ENCODE measurements at regions of chr2 and their contacts with region 1.

Region 1: DNA sequence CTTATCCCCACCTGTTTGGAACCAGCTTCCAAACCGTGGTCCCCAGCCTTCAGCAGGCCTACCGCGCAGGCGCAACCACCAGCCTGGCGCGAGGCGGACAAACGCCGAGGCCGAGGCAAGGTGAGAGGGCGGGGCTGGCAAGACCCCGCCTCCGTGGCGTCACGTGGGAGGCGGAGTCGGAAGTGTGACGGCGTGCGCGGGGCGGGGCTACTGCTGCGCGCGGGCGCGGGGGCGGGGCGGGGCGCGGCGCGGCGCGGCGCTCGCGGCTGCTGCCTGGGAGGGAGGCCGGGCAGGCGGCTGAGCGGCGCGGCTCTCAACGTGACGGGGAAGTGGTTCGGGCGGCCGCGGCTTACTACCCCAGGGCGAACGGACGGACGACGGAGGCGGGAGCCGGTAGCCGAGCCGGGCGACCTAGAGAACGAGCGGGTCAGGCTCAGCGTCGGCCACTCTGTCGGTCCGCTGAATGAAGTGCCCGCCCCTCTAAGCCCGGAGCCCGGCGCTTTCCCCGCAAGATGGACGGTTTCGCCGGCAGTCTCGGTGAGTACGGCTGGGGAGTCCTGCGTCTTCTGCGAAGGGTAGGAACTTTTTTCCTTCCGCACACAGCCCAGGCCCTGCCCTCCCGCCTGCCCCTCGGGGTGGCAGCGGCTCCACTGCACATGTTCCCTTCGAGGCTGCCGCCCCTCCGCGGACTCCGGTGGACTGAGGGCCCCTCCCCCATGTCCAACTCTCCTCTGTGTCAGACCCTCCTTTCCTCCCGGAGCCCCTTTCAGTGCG is at the start of gene EML4:
- DNase-seq: peak; percentile 90 to 94
- ATAC-seq: peak; percentile 95 to 99 (median 97)
- H3K4me3 ChIP-seq: peak within 1 kb of the TSS; percentile 75 to 98 (median 90)
- H3K27ac ChIP-seq: peak within 1 kb of the TSS; percentile 63 to 97 (median 87)
- H3K4me1 ChIP-seq: peaks cover 0 to 44% (median 28%) of the 10 kb centered on the region in 9 donors
- H3K27me3 ChIP-seq: no peaks in the 10 kb centered on the region
- CTCF ChIP-seq: peak in 2 of 9 donors; percentile 4 to 8
- total RNA-seq, gene EML4: 4.5 to 17.2 (median 5.9) TPM

Region 2: GRCh38 chr2:40814616-40815015 is 1354.7 kb before region 1 on chr2:
- intact Hi-C with region 1: loop called in 1 of 10 experiments (anchors 10 kb)
- DNase-seq: no peak
- ATAC-seq: no peak
- H3K4me3 ChIP-seq: no peak overlapping the region
- H3K27ac ChIP-seq: no peak overlapping the region
- H3K4me1 ChIP-seq: peaks cover 0 to 5% (median 0%) of the 10 kb centered on the region in 9 donors
- H3K27me3 ChIP-seq: no peaks in the 10 kb centered on the region
- CTCF ChIP-seq: no peak

Region 3: DNA sequence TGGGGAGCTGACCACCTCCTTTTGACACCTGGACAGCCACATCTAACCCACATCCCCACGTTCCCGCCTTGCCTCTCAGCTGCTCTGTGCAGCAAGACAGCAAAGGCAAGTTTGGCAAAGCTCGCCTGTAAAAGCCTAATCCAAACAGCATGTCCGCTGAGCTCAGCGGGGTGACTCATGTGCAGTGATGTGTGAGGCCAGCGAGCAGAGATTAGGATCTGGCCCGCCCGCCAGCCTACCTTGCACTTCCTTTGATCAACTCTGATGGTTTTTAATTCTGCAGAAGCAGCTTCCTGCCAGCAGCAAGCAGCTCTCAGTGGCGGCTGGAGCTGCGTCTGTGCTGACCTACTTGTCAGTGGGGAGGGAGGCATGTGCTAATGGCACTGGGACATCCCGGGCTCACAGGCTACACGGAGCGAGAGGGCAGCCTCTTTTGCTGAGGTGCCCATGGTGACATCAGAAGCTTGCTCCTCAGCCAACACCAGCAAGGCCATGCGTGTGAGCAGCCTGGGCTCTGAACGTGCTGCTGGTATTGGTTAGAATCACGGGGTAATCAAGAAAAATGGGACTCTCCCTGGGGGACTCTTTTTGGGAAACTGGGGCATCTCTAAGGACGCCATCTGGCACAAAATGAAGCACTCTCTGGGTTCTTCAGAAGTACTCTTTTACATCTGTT is 36.2 kb before region 1 on chr2:
- intact Hi-C with region 1: loop called in 1 of 10 experiments (anchors 2 kb)
- DNase-seq: peak; percentile 71 to 83
- ATAC-seq: peak; percentile 87 to 96 (median 92)
- H3K4me3 ChIP-seq: peak overlapping the region in 7 of 10 donors; percentile 13 to 29 (median 20)
- H3K27ac ChIP-seq: peak overlapping the region in 7 of 10 donors; percentile 53 to 88 (median 65)
- H3K4me1 ChIP-seq: peaks cover 5 to 81% (median 46%) of the 10 kb centered on the region in 9 donors
- H3K27me3 ChIP-seq: peaks cover 0 to 9% (median 0%) of the 10 kb centered on the region in 7 donors
- CTCF ChIP-seq: no peak